ENCODE measurements at regions of chr16 and their contacts with region 1.

Region 1: DNA sequence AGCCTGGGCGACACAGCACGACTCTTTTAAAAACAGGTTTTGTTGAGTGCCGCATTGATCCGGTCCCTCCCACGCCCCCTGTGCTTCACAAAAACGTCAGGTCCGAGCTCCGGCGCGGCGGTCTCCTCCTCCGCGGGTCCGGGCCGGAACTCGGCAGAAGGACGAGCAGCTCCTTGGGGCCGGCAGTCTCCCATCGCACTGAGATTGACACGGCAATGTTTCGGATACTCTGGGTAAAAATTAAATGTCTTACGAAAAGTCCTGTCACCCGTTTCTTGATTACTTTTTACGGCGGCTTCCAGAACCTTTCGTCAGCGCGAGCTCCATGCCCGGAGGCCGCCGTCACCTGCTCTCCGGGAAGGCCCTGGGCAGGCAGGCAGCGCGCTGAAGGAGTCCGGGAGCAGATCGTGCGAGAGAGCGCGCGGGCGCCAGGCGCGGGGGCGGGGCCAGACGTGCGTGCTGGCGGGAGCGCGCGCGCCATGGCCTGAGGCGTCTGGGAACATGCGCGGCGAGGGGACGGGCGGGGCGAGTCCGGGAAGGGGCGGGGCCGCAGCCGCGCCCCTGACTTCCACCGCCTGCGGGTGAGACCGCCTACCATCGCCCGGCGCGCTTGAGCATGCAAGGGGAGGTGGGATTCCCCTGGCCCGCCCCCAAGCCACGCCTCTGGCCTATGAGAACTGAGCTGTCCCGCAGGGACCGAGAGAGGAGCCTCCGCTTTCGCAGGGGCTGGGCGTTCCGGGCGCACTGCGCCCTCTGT is 11.7 kb upstream of the SRL start:
- DNase-seq: peak; percentile 99
- H3K4me3 ChIP-seq: peak overlapping the region; percentile 67
- H3K27ac ChIP-seq: peak overlapping the region; percentile 86
- H3K27me3 ChIP-seq: no peaks in the 10 kb centered on the region
- CTCF ChIP-seq: no peak

Region 2: DNA sequence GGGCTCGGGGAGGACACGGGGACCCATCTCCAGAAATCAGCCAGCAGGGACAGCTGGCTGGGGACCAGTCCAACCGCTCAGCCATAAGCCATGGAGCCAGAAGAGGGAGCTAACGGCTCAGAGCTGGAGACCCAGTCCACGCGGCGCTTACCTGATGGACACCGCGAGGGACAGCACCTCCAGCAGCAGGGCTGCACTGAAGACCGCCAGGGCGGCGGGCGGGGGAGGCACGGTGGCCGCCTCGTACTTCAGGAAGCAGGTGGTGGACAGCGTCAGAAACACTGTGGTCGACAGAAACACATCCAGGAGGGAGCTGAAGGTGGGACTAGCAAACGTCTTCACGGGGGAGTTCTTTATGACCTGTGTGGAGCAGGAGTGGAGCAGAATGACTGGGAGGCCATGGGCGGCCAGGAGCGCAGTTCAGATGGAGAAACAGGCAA is 270.5 kb before region 1 on chr16:
- CTCF ChIA-PET with region 1: interaction called, 10 read pairs
- POLR2A ChIA-PET with region 1: interaction called, 3 read pairs
- DNase-seq: no peak
- H3K4me3 ChIP-seq: no peak overlapping the region
- H3K27ac ChIP-seq: no peak overlapping the region
- H3K27me3 ChIP-seq: no peaks in the 10 kb centered on the region
- CTCF ChIP-seq: peak; percentile 76

Region 3: GRCh38 chr16:4090351-4090851 is 163.2 kb before region 1 on chr16:
- CTCF ChIA-PET with region 1: interaction called, 10 read pairs
- POLR2A ChIA-PET with region 1: no interaction called
- DNase-seq: no peak
- H3K4me3 ChIP-seq: no peak overlapping the region
- H3K27ac ChIP-seq: no peak overlapping the region
- H3K27me3 ChIP-seq: no peaks in the 10 kb centered on the region
- CTCF ChIP-seq: no peak

Region 4: DNA sequence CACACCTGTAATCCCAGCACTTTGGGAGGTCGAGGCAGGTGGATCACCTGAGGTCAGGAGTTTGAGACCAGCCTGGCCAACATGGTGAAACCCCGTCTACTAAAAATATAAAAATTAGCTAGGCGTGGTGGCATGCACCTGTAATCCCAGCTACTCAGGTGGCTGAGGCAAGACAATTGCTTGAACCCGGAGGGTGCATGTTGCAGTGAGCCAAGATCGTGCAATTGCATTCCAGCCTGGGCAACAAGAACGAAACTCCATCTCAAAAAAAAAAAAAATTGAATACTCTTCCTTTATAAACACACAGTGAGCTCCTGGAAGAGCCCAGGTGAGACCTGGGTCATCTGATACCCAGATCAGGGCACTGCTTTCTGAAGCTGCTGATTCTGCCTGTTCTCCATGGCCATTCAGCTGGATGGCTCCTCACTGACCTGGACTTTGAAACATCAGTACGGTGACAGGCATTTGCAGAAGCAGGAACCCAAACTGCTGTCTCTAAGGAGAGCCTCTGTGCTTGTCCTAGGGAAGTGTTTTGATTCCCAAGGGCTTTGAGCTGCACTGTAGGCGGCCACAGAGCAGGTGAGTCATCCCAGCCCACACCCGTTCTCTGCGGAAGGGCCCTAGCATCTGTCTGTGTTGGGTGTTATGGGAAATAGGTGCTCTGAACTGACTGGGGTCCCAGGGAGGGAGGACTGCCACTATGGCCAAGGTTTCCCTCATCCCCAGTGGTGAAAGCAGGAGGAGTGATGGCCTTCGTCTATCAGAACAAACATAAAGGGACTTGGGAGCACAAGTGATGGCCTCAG is 76.8 kb before region 1 on chr16:
- CTCF ChIA-PET with region 1: interaction called, 13 read pairs
- POLR2A ChIA-PET with region 1: no interaction called
- DNase-seq: no peak
- H3K4me3 ChIP-seq: no peak overlapping the region
- H3K27ac ChIP-seq: no peak overlapping the region
- H3K27me3 ChIP-seq: no peaks in the 10 kb centered on the region
- CTCF ChIP-seq: no peak

Region 5: DNA sequence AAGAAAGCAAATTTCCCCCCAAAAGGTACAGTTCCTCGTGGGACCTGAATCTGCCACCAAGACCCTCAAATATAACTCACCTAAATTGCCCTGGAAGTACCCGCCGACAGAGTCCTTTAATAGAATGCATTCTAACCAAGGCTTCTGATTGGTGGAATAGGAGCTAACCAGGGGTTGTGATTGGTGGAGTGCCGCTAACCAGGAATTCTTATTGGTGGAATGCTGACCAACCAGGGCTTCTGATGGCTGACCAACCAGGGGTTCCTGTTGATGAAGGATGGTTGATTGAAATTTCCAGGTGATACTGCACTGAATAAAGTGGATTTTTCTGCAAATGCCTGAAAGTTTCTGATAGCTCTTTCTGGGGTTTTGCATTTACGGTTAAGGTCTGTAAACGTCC is 12.8 kb after region 1 on chr16:
- CTCF ChIA-PET with region 1: interaction called, 20 read pairs
- POLR2A ChIA-PET with region 1: interaction called, 5 read pairs
- DNase-seq: no peak
- H3K4me3 ChIP-seq: no peak overlapping the region
- H3K27ac ChIP-seq: no peak overlapping the region
- H3K27me3 ChIP-seq: no peaks in the 10 kb centered on the region
- CTCF ChIP-seq: no peak

Region 6: DNA sequence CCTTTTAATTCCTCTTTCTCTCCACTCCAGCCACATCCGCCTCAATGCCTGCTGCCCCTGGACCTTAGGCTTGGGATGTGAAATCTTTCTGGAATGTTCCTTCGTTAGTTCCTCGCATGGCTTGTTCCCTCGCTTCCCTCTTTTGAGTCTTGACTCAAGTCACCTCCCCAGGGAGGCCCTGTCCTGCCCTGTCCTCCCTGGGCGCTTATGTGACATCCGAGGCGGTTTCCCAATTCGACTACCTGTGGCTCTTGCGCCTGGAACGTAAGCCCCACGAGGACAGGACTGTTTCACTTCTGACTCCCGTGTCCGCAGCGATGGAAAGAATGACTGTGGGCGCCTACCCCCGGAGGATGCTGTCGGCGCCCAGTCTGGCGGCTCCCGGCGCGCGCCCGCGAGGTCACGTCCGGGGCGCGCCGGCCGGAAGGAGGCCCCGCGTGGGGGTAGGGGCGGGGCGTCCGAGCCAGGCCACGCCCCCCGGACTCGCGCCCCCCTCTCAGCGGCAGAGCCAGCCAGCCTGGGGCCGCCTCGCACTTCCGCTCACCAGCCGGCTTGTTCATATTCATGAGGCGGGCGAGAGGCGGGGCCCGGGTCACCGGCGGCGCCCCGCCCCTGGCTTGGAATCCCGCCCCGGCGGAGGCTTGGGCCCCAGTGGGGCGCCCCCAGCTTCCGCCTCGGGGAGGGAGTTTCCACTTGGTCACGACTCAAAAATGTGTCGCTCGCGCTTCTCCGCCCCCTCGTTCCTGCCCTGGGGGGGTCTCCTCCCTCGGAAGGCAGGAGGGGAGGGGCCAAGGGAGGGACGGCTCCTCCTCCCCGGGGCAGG is 53.9 kb after region 1 on chr16:
- CTCF ChIA-PET with region 1: interaction called, 10 read pairs
- POLR2A ChIA-PET with region 1: no interaction called
- DNase-seq: peak; percentile 88
- H3K4me3 ChIP-seq: peak overlapping the region; percentile 68
- H3K27ac ChIP-seq: peak overlapping the region; percentile 65
- H3K27me3 ChIP-seq: no peaks in the 10 kb centered on the region
- CTCF ChIP-seq: no peak